ENCODE measurements at regions of chr2 and their contacts with region 1.

Region 1: GRCh38 chr2:197499594-197500526 is at the starts of genes HSPD1 and HSPE1:
- DNase-seq: peak; percentile 93
- H3K4me3 ChIP-seq: peak within 1 kb of the TSS; percentile 78
- CTCF ChIP-seq: no peak

Region 2: GRCh38 chr2:197205585-197206215 is 294.2 kb before region 1 on chr2:
- CTCF ChIA-PET with region 1: no interaction called
- POLR2A ChIA-PET with region 1: no interaction called
- DNase-seq: no peak
- H3K4me3 ChIP-seq: no peak overlapping the region
- CTCF ChIP-seq: no peak

Region 3: DNA sequence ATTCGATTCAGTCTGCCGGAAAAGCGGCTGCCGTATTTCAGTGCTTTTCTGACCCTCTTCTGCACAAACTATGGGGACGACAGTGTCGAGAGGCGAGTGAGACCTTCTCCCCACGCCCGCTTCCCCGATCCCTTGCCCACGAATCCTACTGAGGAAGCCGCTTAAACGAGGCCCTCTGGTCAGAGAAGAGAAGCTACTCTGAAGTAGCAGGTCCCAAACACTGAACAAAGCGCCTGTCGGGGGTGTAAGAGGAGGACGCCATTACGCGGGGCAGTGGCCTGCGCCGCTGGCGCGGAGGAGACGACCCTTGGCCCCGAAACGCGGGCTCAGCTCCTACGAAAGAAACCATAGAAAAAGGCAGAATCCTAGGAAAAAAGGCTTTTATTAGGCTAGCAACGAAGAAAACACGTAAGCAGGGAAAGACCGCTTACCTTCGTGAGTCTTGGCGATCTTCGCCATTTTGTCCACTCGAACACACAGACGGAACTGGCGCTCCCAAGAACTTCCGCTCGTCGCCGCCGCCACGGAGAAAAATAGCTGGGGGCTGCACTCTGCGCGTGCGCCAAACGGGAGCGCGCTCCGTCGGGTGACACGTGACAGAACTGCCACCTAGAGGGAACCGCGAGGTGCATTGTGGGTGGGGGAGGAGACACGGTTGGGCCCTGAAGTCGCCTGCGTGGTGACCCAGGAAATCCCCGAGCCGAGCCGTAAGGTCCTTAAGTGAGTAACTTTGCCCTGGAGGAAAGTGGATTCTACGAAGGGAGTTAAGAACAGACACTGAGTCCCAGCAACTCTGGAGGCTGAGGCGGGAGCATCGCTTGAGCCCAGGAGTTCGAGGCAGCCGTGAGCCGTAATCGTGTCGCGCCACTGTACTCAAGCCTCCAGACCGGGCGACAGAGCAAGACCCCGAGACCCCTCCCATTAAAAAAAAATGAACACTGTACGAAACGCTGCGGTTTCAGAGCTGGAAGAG is 65.0 kb before region 1 on chr2 and contains the start of gene SF3B1:
- CTCF ChIA-PET with region 1: no interaction called
- POLR2A ChIA-PET with region 1: interaction called, 16 read pairs
- DNase-seq: peak; percentile 89
- H3K4me3 ChIP-seq: peak within 1 kb of the TSS; percentile 93
- CTCF ChIP-seq: no peak

Region 4: DNA sequence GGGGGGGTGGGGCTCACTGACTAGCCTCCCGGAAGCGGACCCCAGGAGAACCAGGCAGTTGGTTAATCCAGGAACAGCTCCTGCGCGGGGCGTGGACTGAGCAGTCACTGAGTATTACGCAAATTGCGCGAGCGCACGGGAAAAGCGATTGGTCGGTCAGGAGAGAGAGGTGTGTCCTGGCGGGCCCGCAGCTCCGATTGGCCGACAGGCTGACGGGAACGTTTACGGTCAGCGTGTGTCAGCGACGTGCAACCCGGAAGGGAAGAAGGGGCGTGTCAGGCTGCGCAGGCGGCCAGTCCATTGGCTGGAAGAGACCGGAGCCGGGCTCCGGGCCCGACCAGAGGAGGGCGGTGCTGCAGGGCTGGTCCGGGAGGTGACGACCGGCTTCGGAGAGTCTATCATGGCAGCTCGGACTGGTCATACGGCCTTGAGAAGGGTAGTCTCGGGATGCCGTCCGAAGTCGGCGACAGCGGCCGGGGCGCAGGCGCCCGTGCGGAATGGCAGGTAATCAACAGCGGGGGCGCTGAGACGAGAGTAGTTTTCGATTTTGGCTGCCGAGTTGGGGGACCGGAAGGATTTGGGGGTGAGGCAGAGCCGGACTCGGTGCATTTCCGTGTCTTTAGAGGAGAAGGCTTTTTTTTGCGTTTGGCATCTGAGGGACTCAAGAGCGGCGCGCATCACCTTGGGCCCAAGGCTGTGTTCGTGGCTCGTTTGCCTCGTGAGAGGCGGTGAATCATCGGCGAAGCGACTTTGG is 46.5 kb before region 1 on chr2 and contains the start of gene COQ10B:
- CTCF ChIA-PET with region 1: no interaction called
- POLR2A ChIA-PET with region 1: interaction called, 17 read pairs
- DNase-seq: peak; percentile 99
- H3K4me3 ChIP-seq: peak within 1 kb of the TSS; percentile 99
- CTCF ChIP-seq: peak; percentile 37

Region 5: GRCh38 chr2:197515739-197516392 is 16.0 kb after region 1 on chr2 and contains the start of gene MOB4:
- CTCF ChIA-PET with region 1: interaction called, 4 read pairs
- POLR2A ChIA-PET with region 1: interaction called, 25 read pairs
- DNase-seq: peak; percentile 71
- H3K4me3 ChIP-seq: peak within 1 kb of the TSS; percentile 93
- CTCF ChIP-seq: no peak

Region 6: GRCh38 chr2:197740200-197740599 is 240.3 kb after region 1 on chr2:
- CTCF ChIA-PET with region 1: no interaction called
- POLR2A ChIA-PET with region 1: no interaction called
- DNase-seq: no peak
- H3K4me3 ChIP-seq: no peak overlapping the region
- CTCF ChIP-seq: no peak